ENCODE measurements at regions of chr2 and their contacts with region 1.

Region 1: GRCh38 chr2:23926750-23927571 is at the start of gene ATAD2B:
- DNase-seq: peak; percentile 96
- ATAC-seq: peak; percentile 80
- H3K4me3 Mint-ChIP-seq: peak within 1 kb of the TSS; percentile 80
- H3K27ac Mint-ChIP-seq: peak within 1 kb of the TSS; percentile 100
- H3K4me1 Mint-ChIP-seq: peaks cover 41% of the 10 kb centered on the region
- H3K27me3 Mint-ChIP-seq: no peaks in the 10 kb centered on the region
- total RNA-seq, gene ATAD2B: 10.9 to 12.7 TPM

Region 2: GRCh38 chr2:23384551-23385349 is 542.2 kb before region 1 on chr2 and contains the start of gene KLHL29:
- CTCF ChIA-PET with region 1: no interaction called
- POLR2A ChIA-PET with region 1: no interaction called
- intact Hi-C with region 1: loop called in 1 of 2 experiments (anchors 10 kb)
- DNase-seq: peak; percentile 83
- ATAC-seq: peak; percentile 71
- H3K4me3 Mint-ChIP-seq: peak within 1 kb of the TSS; percentile 76
- H3K27ac Mint-ChIP-seq: peak within 1 kb of the TSS; percentile 34
- H3K4me1 Mint-ChIP-seq: peaks cover 25% of the 10 kb centered on the region
- H3K27me3 Mint-ChIP-seq: peaks cover 54% of the 10 kb centered on the region
- total RNA-seq, gene KLHL29: 1.7 to 2.0 TPM

Region 3: DNA sequence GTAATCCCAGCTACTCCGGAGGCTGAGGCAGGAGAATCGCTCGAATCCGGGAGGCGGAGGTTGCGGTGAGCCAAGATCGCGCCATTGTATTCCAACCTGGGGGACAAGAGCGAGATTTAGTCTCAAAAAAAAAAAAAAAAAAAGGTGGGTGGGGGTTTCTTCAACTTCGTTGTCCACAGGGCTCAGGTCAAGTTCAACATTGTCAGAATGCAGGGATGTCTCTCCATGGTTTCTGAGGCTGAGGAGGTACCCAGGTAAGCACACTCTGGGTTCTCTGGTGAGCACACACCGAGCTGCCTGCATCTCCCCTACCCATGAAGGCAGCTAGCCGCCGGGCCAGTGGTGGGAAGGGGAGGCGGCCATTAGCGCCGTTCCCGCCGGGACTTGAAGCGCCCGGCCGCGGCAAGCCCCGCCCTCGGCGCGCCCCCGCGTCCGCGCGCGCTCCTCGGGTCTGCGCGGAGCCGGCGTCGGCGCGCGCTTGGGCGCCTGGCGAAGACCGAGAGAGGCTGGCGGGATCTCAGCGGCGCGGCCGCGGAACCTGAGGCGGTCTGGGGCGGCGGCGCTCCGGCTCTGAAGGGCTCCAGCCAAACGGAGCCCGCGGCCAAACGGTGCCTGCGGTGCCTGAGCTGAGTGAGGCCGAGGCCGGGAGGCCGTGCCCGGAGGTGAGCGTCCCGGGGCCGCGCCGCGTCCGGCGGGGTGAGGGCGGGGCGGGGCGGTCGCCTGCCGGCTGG is 13.2 kb after region 1 on chr2 and contains the start of gene UBXN2A:
- CTCF ChIA-PET with region 1: interaction called, 61 read pairs
- POLR2A ChIA-PET with region 1: interaction called, 44 read pairs
- intact Hi-C with region 1: loop called (anchors 1 kb)
- DNase-seq: peak; percentile 85
- ATAC-seq: peak; percentile 88
- H3K4me3 Mint-ChIP-seq: peak within 1 kb of the TSS; percentile 84
- H3K27ac Mint-ChIP-seq: peak within 1 kb of the TSS; percentile 93
- H3K4me1 Mint-ChIP-seq: peaks cover 18% of the 10 kb centered on the region
- H3K27me3 Mint-ChIP-seq: peaks cover 5% of the 10 kb centered on the region
- total RNA-seq, gene UBXN2A: 9.1 to 10.5 TPM

Region 4: GRCh38 chr2:24075915-24076848 is 149.2 kb after region 1 on chr2 and contains the start of gene SF3B6:
- CTCF ChIA-PET with region 1: interaction called, 25 read pairs
- POLR2A ChIA-PET with region 1: interaction called, 33 read pairs
- intact Hi-C with region 1: loop called (anchors 1 kb)
- DNase-seq: peak; percentile 100
- ATAC-seq: peak; percentile 91
- H3K4me3 Mint-ChIP-seq: peak within 1 kb of the TSS; percentile 99
- H3K27ac Mint-ChIP-seq: peak within 1 kb of the TSS; percentile 99
- H3K4me1 Mint-ChIP-seq: peaks cover 43% of the 10 kb centered on the region
- H3K27me3 Mint-ChIP-seq: no peaks in the 10 kb centered on the region
- total RNA-seq, gene SF3B6: 128 to 143 TPM

Region 5: GRCh38 chr2:24164125-24164973 is 237.4 kb after region 1 on chr2:
- CTCF ChIA-PET with region 1: interaction called, 9 read pairs
- POLR2A ChIA-PET with region 1: no interaction called
- intact Hi-C with region 1: loop called in 1 of 2 experiments (anchors 1 kb)
- DNase-seq: peak; percentile 82
- ATAC-seq: peak; percentile 88
- H3K4me3 Mint-ChIP-seq: no peak overlapping the region
- H3K27ac Mint-ChIP-seq: no peak overlapping the region
- H3K4me1 Mint-ChIP-seq: no peaks in the 10 kb centered on the region
- H3K27me3 Mint-ChIP-seq: no peaks in the 10 kb centered on the region

Region 6: DNA sequence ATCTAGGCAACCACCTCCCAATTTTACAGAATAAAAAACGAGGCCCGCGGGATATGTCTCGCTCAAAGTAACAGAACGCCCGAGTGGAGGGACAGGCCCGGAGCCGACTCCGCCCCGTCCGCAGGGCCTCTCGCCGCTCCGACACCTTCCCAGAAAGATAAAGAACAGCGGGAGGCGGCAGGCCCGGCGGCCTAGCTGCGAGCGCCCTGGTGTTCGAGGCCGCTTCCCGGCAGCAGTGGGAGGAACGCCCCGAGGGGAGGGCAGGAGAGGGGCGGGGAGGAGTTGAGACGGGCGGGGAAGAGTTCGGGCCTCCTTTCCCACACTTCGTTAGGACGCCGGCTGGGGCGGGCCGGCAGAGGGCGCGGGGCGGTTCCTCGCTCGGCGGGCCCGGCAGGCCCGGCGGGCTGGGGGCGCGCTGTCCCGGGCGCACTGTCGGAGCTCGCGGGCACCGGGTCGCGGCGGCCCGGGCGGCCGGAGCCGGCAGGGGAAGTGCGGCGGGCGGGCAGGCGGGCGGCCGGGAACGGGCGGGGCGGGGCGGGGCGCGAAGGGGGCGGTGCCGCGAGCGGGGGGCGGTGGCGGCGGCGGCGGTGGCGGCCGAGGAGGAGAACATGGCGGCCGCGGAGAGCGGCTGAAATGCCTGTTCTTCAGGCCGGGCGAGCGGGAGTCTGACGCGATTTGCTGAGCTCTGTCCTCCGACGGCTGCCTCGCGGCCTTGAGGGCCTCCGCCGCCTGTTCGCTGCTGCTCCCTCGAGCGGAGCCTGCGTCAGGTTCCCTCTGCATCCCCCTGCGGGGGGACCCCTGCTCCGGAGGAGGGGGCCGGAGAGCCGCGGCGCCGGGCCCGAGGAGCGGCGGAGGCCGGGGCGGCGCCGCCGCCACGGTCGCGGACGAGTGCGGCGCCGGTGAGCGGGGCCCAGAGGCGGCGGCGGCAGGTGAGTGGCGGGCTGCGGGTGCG is 564.0 kb after region 1 on chr2 and contains the start of gene NCOA1:
- CTCF ChIA-PET with region 1: no interaction called
- POLR2A ChIA-PET with region 1: no interaction called
- intact Hi-C with region 1: loop called in 1 of 2 experiments (anchors 10 kb)
- DNase-seq: peak; percentile 96
- ATAC-seq: peak; percentile 89
- H3K4me3 Mint-ChIP-seq: peak within 1 kb of the TSS; percentile 85
- H3K27ac Mint-ChIP-seq: peak within 1 kb of the TSS; percentile 95
- H3K4me1 Mint-ChIP-seq: peaks cover 46% of the 10 kb centered on the region
- H3K27me3 Mint-ChIP-seq: no peaks in the 10 kb centered on the region
- total RNA-seq, gene NCOA1: 20.6 to 29.3 TPM

Region 7: DNA sequence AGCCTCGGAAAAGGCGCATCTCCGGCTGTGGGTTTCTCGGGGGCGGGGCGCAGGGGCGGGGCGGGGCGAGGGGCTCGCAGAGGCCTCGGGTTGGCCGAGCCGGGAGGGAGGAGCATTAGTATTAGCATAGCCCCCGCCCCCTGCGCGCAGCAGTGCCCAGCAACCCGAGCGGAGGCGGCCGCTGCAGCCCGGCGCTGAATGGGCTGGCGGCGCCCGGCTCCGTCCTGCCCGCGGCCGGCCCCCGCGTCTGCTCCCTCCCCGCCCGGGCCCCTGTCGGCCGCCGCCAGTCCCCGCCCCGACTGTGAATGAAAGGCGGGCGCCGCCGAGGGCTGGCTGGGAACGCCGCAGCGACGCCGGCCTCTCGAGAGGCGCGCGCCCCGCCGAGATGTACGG is 1115.0 kb after region 1 on chr2 and contains the start of gene EFR3B:
- CTCF ChIA-PET with region 1: no interaction called
- POLR2A ChIA-PET with region 1: no interaction called
- intact Hi-C with region 1: loop called in 1 of 2 experiments (anchors 10 kb)
- DNase-seq: peak; percentile 93
- ATAC-seq: peak; percentile 84
- H3K4me3 Mint-ChIP-seq: peak within 1 kb of the TSS; percentile 71
- H3K27ac Mint-ChIP-seq: no peak within 1 kb of the TSS
- H3K4me1 Mint-ChIP-seq: peaks cover 32% of the 10 kb centered on the region
- H3K27me3 Mint-ChIP-seq: peaks cover 38% of the 10 kb centered on the region
- total RNA-seq, gene EFR3B: 1.0 to 1.1 TPM

Measured in activated CD4-positive, alpha-beta T cell treated with anti-CD3 and anti-CD28 coated beads for 36 hours (primary cell).